Adrenal gland (tissue), 19 donors: ENCODE measurements at regions of chr3 and their contacts with region 1.

Region 1: DNA sequence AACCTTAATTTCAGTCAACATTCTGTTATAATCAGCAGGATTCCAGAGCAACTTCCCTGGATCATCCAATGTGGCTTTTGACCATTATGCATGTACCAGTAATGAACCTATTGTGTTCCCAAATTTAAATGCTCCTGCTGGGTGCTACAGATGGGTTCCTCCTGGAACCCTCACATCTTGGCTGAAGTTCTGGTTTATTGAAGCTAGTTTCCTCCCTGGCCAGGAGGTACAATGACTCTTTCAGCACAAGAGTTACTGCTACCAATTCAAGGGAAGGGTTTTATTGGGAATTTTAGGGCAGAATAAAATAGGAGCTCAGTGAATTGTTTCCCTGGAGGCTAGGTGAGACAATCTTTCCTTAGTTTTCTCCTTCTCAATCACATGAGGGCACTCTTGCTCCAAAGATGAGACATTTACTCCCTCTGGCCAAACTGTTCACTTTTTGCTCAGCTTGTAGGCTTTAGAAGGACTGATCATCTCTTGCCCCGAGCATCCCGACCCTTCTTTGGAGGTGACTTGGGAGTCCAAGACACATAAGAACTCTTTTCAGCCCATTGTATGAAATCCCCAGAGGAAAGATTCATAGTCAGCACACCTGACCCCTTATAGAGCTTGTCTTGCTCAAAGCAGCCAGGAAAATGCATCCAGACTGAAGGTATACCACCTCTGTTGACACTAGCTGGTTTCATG is 8.8 kb upstream of the NPHP3 start:
- DNase-seq: peak in 2 of 7 donors; percentile 10 to 20
- H3K4me3 ChIP-seq: no peak overlapping the region
- H3K27ac ChIP-seq: no peak overlapping the region
- H3K4me1 ChIP-seq: no peaks in the 10 kb centered on the region
- H3K27me3 ChIP-seq: no peaks in the 10 kb centered on the region
- CTCF ChIP-seq: peak; percentile 10 to 66 (median 54)
- POLR2A ChIP-seq: no peak

Region 2: DNA sequence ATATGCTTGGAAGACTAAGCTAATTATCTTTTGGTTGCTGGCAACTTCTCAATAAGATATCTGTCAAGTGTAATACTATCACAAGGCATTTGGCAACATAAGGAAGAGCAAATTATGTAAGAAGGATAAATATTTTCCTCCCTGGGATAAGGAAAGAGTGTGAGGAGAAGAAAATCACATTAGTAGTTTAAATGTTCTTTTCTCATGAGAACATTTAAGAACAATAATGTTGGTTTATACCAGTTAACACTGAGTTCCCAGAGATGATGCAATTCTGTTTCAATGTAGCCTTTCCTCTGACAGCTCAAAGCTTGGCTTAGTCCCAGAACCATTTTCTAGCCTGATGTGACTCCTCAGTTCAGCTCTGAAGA is 57.2 kb after region 1 on chr3:
- intact Hi-C with region 1: no loop called
- DNase-seq: peak; percentile 20 to 63 (median 42)
- H3K4me3 ChIP-seq: no peak overlapping the region
- H3K27ac ChIP-seq: no peak overlapping the region
- H3K4me1 ChIP-seq: no peaks in the 10 kb centered on the region
- H3K27me3 ChIP-seq: no peaks in the 10 kb centered on the region
- CTCF ChIP-seq: no peak
- POLR2A ChIP-seq: no peak

Region 3: GRCh38 chr3:132879636-132880035 is 148.6 kb after region 1 on chr3:
- intact Hi-C with region 1: no loop called
- DNase-seq: no peak
- H3K4me3 ChIP-seq: no peak overlapping the region
- H3K27ac ChIP-seq: no peak overlapping the region
- H3K4me1 ChIP-seq: no peaks in the 10 kb centered on the region
- H3K27me3 ChIP-seq: no peaks in the 10 kb centered on the region
- CTCF ChIP-seq: no peak
- POLR2A ChIP-seq: no peak

Region 4: DNA sequence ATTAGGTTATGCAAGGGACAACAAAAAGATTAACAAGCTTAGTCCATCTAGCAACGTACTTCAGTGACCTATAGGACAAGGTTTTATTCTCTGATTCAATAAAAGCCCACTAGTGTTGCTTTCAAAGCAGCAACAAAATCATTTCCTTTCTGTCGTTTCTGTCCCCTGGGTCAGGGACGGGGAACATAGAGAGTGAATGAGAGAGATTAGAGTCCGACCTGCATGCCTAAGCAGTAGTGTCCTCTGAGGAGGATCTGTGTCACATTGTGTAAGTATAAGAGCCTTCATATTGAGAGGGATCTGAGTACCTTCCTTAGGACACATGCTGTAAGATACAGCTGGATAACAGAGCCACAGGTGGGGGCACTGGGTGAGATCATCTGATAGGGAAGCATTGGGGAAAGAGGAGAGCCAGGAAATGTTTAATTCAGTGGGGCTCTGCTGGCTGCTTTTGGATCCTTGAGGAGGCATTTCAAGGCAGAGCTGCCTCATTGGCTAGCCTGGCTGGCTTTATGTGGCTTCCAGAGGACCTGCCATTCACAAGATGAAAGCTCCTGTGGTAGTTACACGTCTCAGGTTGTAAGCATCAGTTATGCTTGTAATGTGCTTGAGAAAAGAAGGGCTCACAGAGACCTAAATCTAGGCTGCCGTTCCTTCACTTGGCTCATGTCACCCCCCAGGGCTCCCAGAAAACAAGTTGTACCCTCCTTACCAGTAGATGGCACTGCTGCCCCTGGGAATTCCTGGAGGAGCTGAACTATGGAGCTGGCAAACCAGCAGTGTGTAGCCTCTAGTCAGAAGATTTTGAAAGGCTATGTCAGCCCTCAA is 309.9 kb after region 1 on chr3:
- intact Hi-C with region 1: loop called (anchors 2 to 10 kb)
- DNase-seq: peak; percentile 85 to 93 (median 89)
- H3K4me3 ChIP-seq: peak overlapping the region in 1 of 4 donors; percentile 12
- H3K27ac ChIP-seq: peak overlapping the region; percentile 11 to 78 (median 58)
- H3K4me1 ChIP-seq: peaks cover 12 to 40% of the 10 kb centered on the region in 2 donors
- H3K27me3 ChIP-seq: no peaks in the 10 kb centered on the region
- CTCF ChIP-seq: peak; percentile 72 to 88 (median 84)
- POLR2A ChIP-seq: no peak

Region 5: GRCh38 chr3:133384331-133385027 is 653.4 kb after region 1 on chr3:
- intact Hi-C with region 1: loop called (anchors 10 kb)
- DNase-seq: peak; percentile 67 to 91 (median 80)
- H3K4me3 ChIP-seq: no peak overlapping the region
- H3K27ac ChIP-seq: no peak overlapping the region
- H3K4me1 ChIP-seq: peaks cover 3 to 10% of the 10 kb centered on the region in 2 donors
- H3K27me3 ChIP-seq: no peaks in the 10 kb centered on the region
- CTCF ChIP-seq: peak; percentile 74 to 93 (median 90)
- POLR2A ChIP-seq: no peak

Region 6: DNA sequence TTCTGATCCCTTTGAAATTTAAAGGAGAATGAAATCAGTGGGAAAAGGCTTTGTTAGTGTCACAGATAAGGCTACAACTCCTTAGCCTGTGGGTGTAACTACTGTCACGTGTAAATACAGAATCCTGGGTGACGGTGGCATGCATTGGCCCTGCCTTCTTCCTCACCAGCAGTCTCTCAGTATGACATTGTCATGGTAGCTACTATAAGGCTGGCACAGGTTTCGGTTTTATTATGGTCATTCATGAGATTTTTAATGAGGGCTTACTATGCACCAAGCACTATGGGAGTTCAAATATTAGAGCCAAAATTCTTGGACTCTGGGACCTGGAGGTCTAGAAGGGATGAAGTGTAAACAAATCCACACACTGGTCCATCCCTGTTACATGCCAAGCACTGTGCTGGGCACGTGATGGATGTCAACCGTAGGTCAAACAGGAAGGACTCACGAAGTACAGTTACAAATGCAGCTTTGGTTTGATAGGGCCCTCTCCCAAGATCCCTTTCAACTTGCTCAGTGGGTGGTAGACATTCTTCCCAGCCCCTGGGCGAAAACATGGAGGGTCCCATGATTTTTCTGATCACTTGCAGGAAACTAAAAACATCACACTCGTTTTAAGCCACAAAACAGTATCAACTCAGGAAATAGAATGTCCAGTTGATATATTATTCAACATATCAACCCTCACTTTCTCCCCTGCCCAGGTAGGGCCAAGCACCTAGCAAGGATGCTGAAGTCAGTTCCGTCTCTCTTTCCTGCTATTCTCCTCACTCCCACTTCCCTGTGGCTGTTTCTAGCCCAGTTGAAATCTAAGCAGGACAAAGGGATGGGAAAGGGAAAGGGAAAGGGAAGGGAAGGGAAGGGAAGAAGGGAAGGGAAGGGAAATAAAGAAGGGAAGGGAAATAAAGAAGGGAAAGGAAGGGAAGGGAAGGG is 694.2 kb after region 1 on chr3:
- intact Hi-C with region 1: loop called (anchors 5 kb)
- DNase-seq: no peak
- H3K4me3 ChIP-seq: no peak overlapping the region
- H3K27ac ChIP-seq: no peak overlapping the region
- H3K4me1 ChIP-seq: peaks cover 0 to 4% of the 10 kb centered on the region in 2 donors
- H3K27me3 ChIP-seq: no peaks in the 10 kb centered on the region
- CTCF ChIP-seq: no peak
- POLR2A ChIP-seq: no peak

Region 7: GRCh38 chr3:133927540-133928066 is 1196.6 kb after region 1 on chr3:
- intact Hi-C with region 1: loop called in 1 of 2 experiments (anchors 10 kb)
- DNase-seq: peak in 6 of 7 donors; percentile 38 to 63 (median 52)
- H3K4me3 ChIP-seq: peak overlapping the region in 2 of 4 donors; percentile 18 to 80
- H3K27ac ChIP-seq: no peak overlapping the region
- H3K4me1 ChIP-seq: peaks cover 0 to 5% of the 10 kb centered on the region in 2 donors
- H3K27me3 ChIP-seq: no peaks in the 10 kb centered on the region
- CTCF ChIP-seq: peak; percentile 13 to 88 (median 62)
- POLR2A ChIP-seq: no peak